Activated T-helper 1 cell treated with anti-CD3 and anti-CD28 coated beads, Interleukin-12 subunit alpha, Interleukin-12 subunit beta, Interleukin-2, Interleukin-4 antibody, amounts not matched to agents 30 ng/mL and 10 ng/mL and 1 ng/mL, durations not matched to agents 14 hours and 24 hours and 36 hours (primary cell): ENCODE measurements at regions of chr20 and their contacts with region 1.

Region 1: GRCh38 chr20:43975096-43975768 is 60.6 kb downstream of the TOX2 start:
- DNase-seq: no peak
- H3K4me3 Mint-ChIP-seq: no peak overlapping the region
- H3K27ac Mint-ChIP-seq: no peak overlapping the region
- H3K4me1 Mint-ChIP-seq: peaks cover 42% of the 10 kb centered on the region
- H3K27me3 Mint-ChIP-seq: peaks cover 11% of the 10 kb centered on the region

Region 2: GRCh38 chr20:43942661-43943290 is 32.5 kb before region 1 on chr20:
- intact Hi-C with region 1: loop called (anchors 1 kb)
- DNase-seq: peak; percentile 33
- H3K4me3 Mint-ChIP-seq: peak overlapping the region; percentile 70
- H3K27ac Mint-ChIP-seq: peak overlapping the region; percentile 88
- H3K4me1 Mint-ChIP-seq: peaks cover 75% of the 10 kb centered on the region
- H3K27me3 Mint-ChIP-seq: peaks cover 14% of the 10 kb centered on the region

Region 3: GRCh38 chr20:44018259-44018941 is 43.2 kb after region 1 on chr20:
- intact Hi-C with region 1: loop called (anchors 5 kb)
- DNase-seq: no peak
- H3K4me3 Mint-ChIP-seq: no peak overlapping the region
- H3K27ac Mint-ChIP-seq: no peak overlapping the region
- H3K4me1 Mint-ChIP-seq: peaks cover 32% of the 10 kb centered on the region
- H3K27me3 Mint-ChIP-seq: peaks cover 27% of the 10 kb centered on the region

Region 4: GRCh38 chr20:44089987-44090674 is 114.9 kb after region 1 on chr20:
- intact Hi-C with region 1: no loop called
- DNase-seq: no peak
- H3K4me3 Mint-ChIP-seq: no peak overlapping the region
- H3K27ac Mint-ChIP-seq: no peak overlapping the region
- H3K4me1 Mint-ChIP-seq: peaks cover 4% of the 10 kb centered on the region
- H3K27me3 Mint-ChIP-seq: peaks cover 5% of the 10 kb centered on the region